Activated B cell treated with CpG ODN at 0.5 μM for 24 hours (primary cell): ENCODE measurements at regions of chr10 and their contacts with region 1.

Region 1: DNA sequence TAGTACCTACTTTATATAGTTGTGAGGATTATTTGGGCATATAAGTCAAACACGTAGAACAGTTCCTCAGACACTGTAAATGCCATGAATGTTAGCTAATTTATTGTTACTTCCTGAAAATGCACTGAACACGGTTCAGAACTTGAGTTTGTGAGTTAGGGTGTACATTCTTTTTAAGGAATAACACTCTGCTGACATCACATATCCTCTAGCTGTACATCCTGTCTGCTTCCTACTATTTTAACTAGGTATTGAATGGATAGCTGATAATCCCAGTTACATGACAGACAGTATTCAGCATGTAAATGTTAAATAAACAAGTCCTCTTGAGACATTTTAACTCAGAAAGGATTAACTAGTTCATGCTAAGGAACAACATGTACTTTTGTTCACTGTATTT is 16.0 kb downstream of the SAMD8 start:
- DNase-seq: no peak
- ATAC-seq: no peak
- H3K4me3 Mint-ChIP-seq: no peak overlapping the region
- H3K27ac Mint-ChIP-seq: peak overlapping the region; percentile 12
- H3K4me1 Mint-ChIP-seq: peaks cover 58% of the 10 kb centered on the region
- H3K27me3 Mint-ChIP-seq: no peaks in the 10 kb centered on the region
- CTCF ChIP-seq: no peak

Region 2: GRCh38 chr10:75111367-75111906 is 16.0 kb before region 1 on chr10 and contains the start of gene SAMD8:
- CTCF ChIA-PET with region 1: no interaction called
- POLR2A ChIA-PET with region 1: interaction called, 13 read pairs
- intact Hi-C with region 1: loop called (anchors 1 kb)
- DNase-seq: peak; percentile 95
- ATAC-seq: peak; percentile 81
- H3K4me3 Mint-ChIP-seq: peak within 1 kb of the TSS; percentile 90
- H3K27ac Mint-ChIP-seq: peak within 1 kb of the TSS; percentile 90
- H3K4me1 Mint-ChIP-seq: peaks cover 45% of the 10 kb centered on the region
- H3K27me3 Mint-ChIP-seq: no peaks in the 10 kb centered on the region
- CTCF ChIP-seq: no peak
- total RNA-seq, gene SAMD8: 25.8 and 29.1 TPM in 2 replicates

Region 3: GRCh38 chr10:75165684-75166622 is 38.5 kb after region 1 on chr10:
- CTCF ChIA-PET with region 1: no interaction called
- POLR2A ChIA-PET with region 1: no interaction called
- intact Hi-C with region 1: loop called (anchors 5 kb)
- DNase-seq: no peak
- ATAC-seq: no peak
- H3K4me3 Mint-ChIP-seq: no peak overlapping the region
- H3K27ac Mint-ChIP-seq: no peak overlapping the region
- H3K4me1 Mint-ChIP-seq: peaks cover 23% of the 10 kb centered on the region
- H3K27me3 Mint-ChIP-seq: no peaks in the 10 kb centered on the region
- CTCF ChIP-seq: no peak